ENCODE measurements at regions of chr20 and their contacts with region 1.

Region 1: GRCh38 chr20:25310268-25310920 is 62.5 kb downstream of the PYGB start:
- DNase-seq: peak; percentile 99
- ATAC-seq: peak; percentile 96
- H3K4me3 ChIP-seq: peak overlapping the region; percentile 33 to 69 (median 34); a peak in 5 of 6 replicates
- H3K27ac ChIP-seq: peak overlapping the region; percentile 76
- H3K4me1 ChIP-seq: peaks cover 51% of the 10 kb centered on the region
- H3K27me3 ChIP-seq: no peaks in the 10 kb centered on the region
- CTCF ChIP-seq: peak; percentile 97
- EP300 ChIP-seq: peak; percentile 90 to 93
- POLR2A ChIP-seq: no peak
- RAD21 ChIP-seq: peak; percentile 91

Region 2: DNA sequence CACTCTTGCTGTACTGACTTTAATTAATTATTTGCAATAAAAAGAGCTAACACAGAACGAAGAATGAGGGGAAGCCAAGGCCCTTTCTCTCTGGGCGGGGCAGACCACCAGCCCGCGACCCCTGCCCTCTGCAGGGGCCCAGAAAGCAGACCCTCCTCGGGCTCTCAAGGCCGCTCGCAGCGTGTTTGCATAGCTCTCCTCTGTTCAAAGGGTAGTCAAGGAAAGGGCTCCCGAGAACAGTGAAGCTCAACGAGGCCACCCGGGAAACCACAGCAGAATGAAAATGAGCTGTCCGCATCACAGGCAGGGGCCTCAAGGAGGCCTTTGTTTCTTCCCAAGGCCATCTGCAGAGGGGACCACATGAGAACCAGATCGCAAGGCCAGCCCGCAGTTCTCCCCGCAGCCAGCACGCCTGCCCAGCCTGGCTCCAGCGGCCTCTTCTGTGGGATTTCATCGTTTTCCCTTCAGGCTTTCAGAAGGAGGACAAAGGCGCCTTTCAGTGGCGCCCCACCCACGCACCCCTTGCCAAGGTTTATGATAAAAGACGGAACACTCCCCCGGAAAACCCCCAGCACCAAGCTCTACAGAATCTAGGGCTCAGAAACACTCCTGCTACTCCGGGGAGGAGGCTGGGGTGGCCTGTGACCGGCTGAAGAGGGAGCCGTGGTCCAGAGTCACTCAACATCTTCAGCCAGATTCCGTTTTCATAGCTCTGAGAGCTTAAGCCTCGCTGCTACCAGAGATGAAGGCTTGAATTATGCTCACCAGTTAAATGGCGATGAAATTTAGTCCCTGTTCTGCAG is 277.7 kb before region 1 on chr20:
- CTCF ChIA-PET with region 1: no interaction called
- POLR2A ChIA-PET with region 1: no interaction called
- in situ Hi-C with region 1: no loop called
- intact Hi-C with region 1: no loop called
- DNase-seq: peak; percentile 88
- ATAC-seq: peak; percentile 91
- H3K4me3 ChIP-seq: peak overlapping the region; percentile 12 to 56 (median 22); a peak in 5 of 6 replicates
- H3K27ac ChIP-seq: peak overlapping the region; percentile 55
- H3K4me1 ChIP-seq: peaks cover 64% of the 10 kb centered on the region
- H3K27me3 ChIP-seq: no peaks in the 10 kb centered on the region
- CTCF ChIP-seq: no peak
- EP300 ChIP-seq: peak; percentile 17 to 69; a peak in 3 of 4 replicates
- POLR2A ChIP-seq: peak in 1 of 2 experiments; percentile 32; a peak in 1 of 4 replicates
- RAD21 ChIP-seq: no peak

Region 3: DNA sequence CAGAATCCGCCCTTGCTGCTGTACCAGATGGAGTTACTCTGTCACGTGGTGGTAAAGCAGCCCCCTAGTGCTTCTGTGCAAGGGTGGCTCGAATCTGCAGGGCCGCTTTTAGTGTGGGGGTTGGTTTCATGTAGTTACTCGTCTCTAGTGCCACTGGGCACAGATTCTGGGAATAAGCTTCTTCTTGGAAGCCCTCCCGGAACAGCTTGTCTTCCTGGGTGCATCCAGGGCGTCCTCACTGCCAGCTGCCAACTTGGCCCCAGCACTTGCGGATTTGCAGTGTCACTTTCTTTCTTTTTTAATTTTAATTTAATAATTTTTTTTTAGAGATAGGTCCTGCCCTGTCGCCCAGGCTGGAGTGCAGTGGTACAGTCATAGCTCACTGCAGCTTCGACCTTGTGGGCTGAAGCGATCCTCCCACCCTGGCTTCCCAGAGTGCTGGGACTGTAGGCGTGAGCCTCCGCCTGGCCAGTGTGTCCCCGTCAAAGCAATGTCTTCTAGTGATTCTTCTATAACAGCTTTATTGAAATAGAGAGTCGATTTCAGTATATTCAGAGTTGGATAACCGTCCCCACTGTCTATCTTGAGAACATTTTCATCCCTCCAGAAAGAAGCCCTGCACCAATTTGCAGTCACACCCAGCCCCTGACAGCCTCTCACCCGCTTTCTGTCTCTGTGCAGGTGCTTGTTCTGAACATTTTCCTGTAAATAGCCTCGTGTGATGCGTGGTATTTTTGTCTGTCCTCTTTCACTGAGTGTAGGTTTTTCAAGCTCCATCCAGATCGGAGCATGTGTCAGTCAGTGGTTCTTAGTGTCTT is 36.6 kb before region 1 on chr20:
- CTCF ChIA-PET with region 1: no interaction called
- POLR2A ChIA-PET with region 1: no interaction called
- in situ Hi-C with region 1: no loop called
- intact Hi-C with region 1: no loop called
- DNase-seq: no peak
- ATAC-seq: no peak
- H3K4me3 ChIP-seq: no peak overlapping the region
- H3K27ac ChIP-seq: no peak overlapping the region
- H3K4me1 ChIP-seq: no peaks in the 10 kb centered on the region
- H3K27me3 ChIP-seq: no peaks in the 10 kb centered on the region
- CTCF ChIP-seq: no peak
- EP300 ChIP-seq: no peak
- POLR2A ChIP-seq: no peak
- RAD21 ChIP-seq: no peak

Region 4: DNA sequence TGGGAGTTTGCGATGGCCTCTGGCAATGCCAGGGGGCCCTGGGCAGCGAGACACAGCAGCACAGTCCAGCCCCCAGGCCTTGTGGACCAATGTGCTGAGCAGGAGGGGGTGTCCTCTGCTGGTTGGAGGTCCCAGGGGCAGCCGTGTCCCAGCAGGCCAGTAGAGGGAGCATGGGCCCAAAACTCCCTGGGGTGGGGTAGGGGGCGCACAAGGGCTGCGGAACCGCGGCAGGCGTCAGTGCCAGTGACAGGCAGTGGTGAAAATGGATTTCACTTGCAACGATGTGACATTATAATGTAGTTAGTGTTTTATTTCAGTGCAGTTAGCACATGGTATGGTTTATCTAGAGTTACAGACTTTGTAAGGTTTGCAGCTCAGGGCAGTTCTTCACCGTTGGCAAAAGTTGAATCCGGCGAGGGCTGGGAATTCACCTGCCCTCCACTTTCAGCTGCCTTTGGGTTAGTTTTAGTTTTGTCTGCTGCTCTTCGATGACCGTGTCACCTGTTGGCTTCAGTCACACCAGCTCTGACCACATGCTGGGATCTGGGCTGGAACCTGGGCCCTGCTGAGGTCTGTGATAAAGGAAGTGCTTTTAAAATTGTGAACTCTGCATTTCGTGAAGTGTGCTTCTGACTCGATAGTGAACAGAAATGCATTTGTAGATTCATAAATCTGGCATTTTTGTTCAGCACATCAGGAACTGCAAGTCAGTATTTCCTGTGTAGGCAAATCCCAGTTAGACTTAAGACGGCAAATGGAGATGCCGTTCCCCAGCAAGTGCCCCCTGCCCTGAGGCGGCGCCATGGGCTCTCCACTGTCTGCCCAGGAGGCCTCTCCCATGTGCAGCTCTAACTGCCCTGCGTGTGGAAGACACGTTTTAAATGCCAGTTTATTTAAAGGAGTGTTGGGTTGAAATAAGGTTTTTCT is 15.7 kb before region 1 on chr20:
- CTCF ChIA-PET with region 1: interaction called, 13 read pairs
- POLR2A ChIA-PET with region 1: interaction called, 20 read pairs
- in situ Hi-C with region 1: no loop called
- intact Hi-C with region 1: no loop called
- DNase-seq: peak; percentile 82
- ATAC-seq: peak; percentile 90
- H3K4me3 ChIP-seq: no peak overlapping the region
- H3K27ac ChIP-seq: no peak overlapping the region
- H3K4me1 ChIP-seq: 0 out of 2 replicates have a peak, but pooled peaks cover 5% of the 10 kb centered on the region
- H3K27me3 ChIP-seq: no peaks in the 10 kb centered on the region
- CTCF ChIP-seq: peak; percentile 100
- EP300 ChIP-seq: no peak
- POLR2A ChIP-seq: no peak; a peak in 1 of 4 replicates
- RAD21 ChIP-seq: peak; percentile 98

Region 5: GRCh38 chr20:25336561-25337422 is 26.4 kb after region 1 on chr20:
- CTCF ChIA-PET with region 1: no interaction called
- POLR2A ChIA-PET with region 1: interaction called, 10 read pairs
- in situ Hi-C with region 1: no loop called
- intact Hi-C with region 1: no loop called
- DNase-seq: peak; percentile 82
- ATAC-seq: peak; percentile 81
- H3K4me3 ChIP-seq: no peak overlapping the region
- H3K27ac ChIP-seq: no peak overlapping the region
- H3K4me1 ChIP-seq: peaks cover 45% of the 10 kb centered on the region
- H3K27me3 ChIP-seq: no peaks in the 10 kb centered on the region
- CTCF ChIP-seq: peak; percentile 96
- EP300 ChIP-seq: no peak
- POLR2A ChIP-seq: no peak
- RAD21 ChIP-seq: peak; percentile 91

Region 6: GRCh38 chr20:25390538-25391528 is 80.4 kb after region 1 on chr20 and contains the start of gene ABHD12:
- CTCF ChIA-PET with region 1: no interaction called
- POLR2A ChIA-PET with region 1: interaction called, 20 read pairs
- in situ Hi-C with region 1: no loop called
- intact Hi-C with region 1: loop called (anchors 1 kb)
- DNase-seq: peak; percentile 97
- ATAC-seq: peak; percentile 94
- H3K4me3 ChIP-seq: peak within 1 kb of the TSS; percentile 89 to 95 (median 92)
- H3K27ac ChIP-seq: peak within 1 kb of the TSS; percentile 79
- H3K4me1 ChIP-seq: peaks cover 33% of the 10 kb centered on the region
- H3K27me3 ChIP-seq: no peaks in the 10 kb centered on the region
- CTCF ChIP-seq: peak; percentile 63
- EP300 ChIP-seq: peak in 1 of 2 experiments; percentile 45; a peak in 1 of 4 replicates
- POLR2A ChIP-seq: peak; percentile 93 to 96
- RAD21 ChIP-seq: peak; percentile 62
- total RNA-seq, gene ABHD12: 43.1 and 72.1 TPM in 2 replicates

Region 7: GRCh38 chr20:25407311-25408169 is 97.1 kb after region 1 on chr20 and contains the start of gene GINS1:
- CTCF ChIA-PET with region 1: interaction called, 3 read pairs
- POLR2A ChIA-PET with region 1: interaction called, 9 read pairs
- in situ Hi-C with region 1: no loop called
- intact Hi-C with region 1: loop called (anchors 2 kb)
- DNase-seq: peak; percentile 95
- ATAC-seq: peak; percentile 93
- H3K4me3 ChIP-seq: peak within 1 kb of the TSS; percentile 78 to 89 (median 88)
- H3K27ac ChIP-seq: peak within 1 kb of the TSS; percentile 86
- H3K4me1 ChIP-seq: peaks cover 24% of the 10 kb centered on the region
- H3K27me3 ChIP-seq: no peaks in the 10 kb centered on the region; a peak in 1 of 5 replicates
- CTCF ChIP-seq: peak; percentile 42; the same call in 1 of the 2 replicates
- EP300 ChIP-seq: peak; percentile 37 to 65
- POLR2A ChIP-seq: peak; percentile 94 to 99
- RAD21 ChIP-seq: peak; percentile 48; the same call in 1 of the 2 replicates
- total RNA-seq, gene GINS1: 59.9 and 74.6 TPM in 2 replicates

Measured in HepG2 (cell line).